ENCODE measurements at regions of chr5 and their contacts with region 1.

Region 1: DNA sequence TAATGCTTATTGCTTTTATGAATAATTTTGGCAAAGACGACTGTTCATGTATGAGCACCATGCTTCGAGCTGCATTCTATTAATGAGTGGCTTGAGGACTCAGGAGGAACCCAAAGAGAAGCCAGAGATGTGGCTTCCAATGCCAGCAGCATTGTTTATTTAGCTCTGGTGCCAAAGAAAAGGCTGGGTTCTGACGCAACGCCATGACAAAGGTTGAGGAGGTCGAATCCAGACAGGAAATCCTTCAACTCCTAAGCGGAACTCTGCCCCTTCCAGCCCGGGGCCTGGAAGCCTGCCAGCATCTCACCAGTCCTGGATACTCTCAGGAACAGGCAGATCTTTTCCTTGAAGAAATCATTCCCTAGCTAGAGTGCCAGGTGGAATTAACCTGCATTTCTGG is 104.4 kb downstream of the ARHGAP26 start:
- DNase-seq: peak; percentile 37
- H3K4me3 ChIP-seq: no peak overlapping the region
- H3K27ac ChIP-seq: no peak overlapping the region
- H3K27me3 ChIP-seq: no peaks in the 10 kb centered on the region
- CTCF ChIP-seq: no peak

Region 2: GRCh38 chr5:142726188-142726731 is 148.3 kb before region 1 on chr5:
- in situ Hi-C with region 1: loop called (anchors 10 kb)
- DNase-seq: peak; percentile 85
- H3K4me3 ChIP-seq: no peak overlapping the region
- H3K27ac ChIP-seq: peak overlapping the region; percentile 92
- H3K27me3 ChIP-seq: no peaks in the 10 kb centered on the region
- CTCF ChIP-seq: no peak

Region 3: GRCh38 chr5:143222287-143223231 is 348.0 kb after region 1 on chr5:
- in situ Hi-C with region 1: no loop called
- DNase-seq: no peak
- H3K4me3 ChIP-seq: no peak overlapping the region
- H3K27ac ChIP-seq: no peak overlapping the region
- H3K27me3 ChIP-seq: no peaks in the 10 kb centered on the region
- CTCF ChIP-seq: no peak